Activated CD4-positive, alpha-beta memory T cell treated with anti-CD3 and anti-CD28 coated beads for 36 hours (primary cell): ENCODE measurements at regions of chrX and their contacts with region 1.

Region 1: GRCh38 chrX:131987252-131987651 is 35.9 kb upstream of the STK26 start:
- DNase-seq: peak; percentile 9
- H3K4me3 Mint-ChIP-seq: peak overlapping the region; percentile 42
- H3K27ac Mint-ChIP-seq: peak overlapping the region; percentile 88
- H3K4me1 Mint-ChIP-seq: peaks cover 43% of the 10 kb centered on the region
- H3K27me3 Mint-ChIP-seq: no peaks in the 10 kb centered on the region

Region 2: DNA sequence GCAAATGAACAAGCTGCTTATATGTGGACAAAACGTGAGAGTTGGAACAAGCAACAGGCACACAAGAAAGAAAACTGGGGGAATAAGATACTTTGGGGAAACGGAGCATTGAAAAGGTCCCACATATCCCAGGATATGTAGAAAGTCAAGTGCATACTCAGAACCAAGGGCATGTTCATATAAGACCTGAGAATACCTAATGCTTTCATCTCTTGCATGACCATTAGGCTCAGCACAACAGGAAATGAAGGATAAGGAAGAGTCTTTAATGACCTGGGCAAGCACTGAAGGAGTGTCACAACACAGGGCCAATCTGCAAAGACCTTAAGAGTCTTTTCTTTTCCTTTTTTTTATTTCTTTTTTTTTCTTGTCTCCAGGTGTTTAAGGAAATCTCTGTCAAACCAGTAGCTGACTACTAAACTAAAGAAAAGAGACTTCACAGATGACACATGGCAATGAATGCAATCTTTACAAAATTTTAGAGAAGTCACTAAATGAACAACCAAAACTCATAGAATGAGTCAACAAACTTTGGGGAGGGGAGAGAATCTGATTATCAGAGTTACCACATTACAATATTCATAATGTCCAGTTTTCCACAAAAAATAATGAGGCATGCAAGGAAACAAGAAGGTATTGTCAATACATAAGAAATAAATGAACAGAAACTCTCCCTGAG is 32.0 kb before region 1 on chrX:
- CTCF ChIA-PET with region 1: no interaction called
- POLR2A ChIA-PET with region 1: no interaction called
- intact Hi-C with region 1: loop called (anchors 2 kb)
- DNase-seq: no peak
- H3K4me3 Mint-ChIP-seq: no peak overlapping the region
- H3K27ac Mint-ChIP-seq: no peak overlapping the region
- H3K4me1 Mint-ChIP-seq: peaks cover 7% of the 10 kb centered on the region
- H3K27me3 Mint-ChIP-seq: no peaks in the 10 kb centered on the region

Region 3: GRCh38 chrX:132001127-132001526 is 13.9 kb after region 1 on chrX:
- CTCF ChIA-PET with region 1: no interaction called
- POLR2A ChIA-PET with region 1: no interaction called
- intact Hi-C with region 1: loop called (anchors 1 kb)
- DNase-seq: peak; percentile 47
- H3K4me3 Mint-ChIP-seq: no peak overlapping the region
- H3K27ac Mint-ChIP-seq: no peak overlapping the region
- H3K4me1 Mint-ChIP-seq: peaks cover 26% of the 10 kb centered on the region
- H3K27me3 Mint-ChIP-seq: no peaks in the 10 kb centered on the region